ENCODE measurements at regions of chr1 and their contacts with region 1.

Region 1: GRCh38 chr1:204989266-204990058 is 53.5 kb upstream of the CNTN2 start:
- DNase-seq: peak; percentile 95
- H3K4me3 ChIP-seq: no peak overlapping the region; a peak in 1 of 4 replicates
- H3K27ac ChIP-seq: no peak overlapping the region
- H3K4me1 ChIP-seq: peaks cover 0 to 2% of the 10 kb centered on the region in 2 experiments; a peak in 2 of 4 replicates
- H3K27me3 ChIP-seq: no peaks in the 10 kb centered on the region
- CTCF ChIP-seq: peak; percentile 98
- EP300 ChIP-seq: no peak
- RAD21 ChIP-seq: peak; percentile 99

Region 2: GRCh38 chr1:204975570-204976235 is 13.8 kb before region 1 on chr1:
- CTCF ChIA-PET with region 1: interaction called, 123 read pairs
- POLR2A ChIA-PET with region 1: no interaction called
- DNase-seq: peak; percentile 88
- H3K4me3 ChIP-seq: no peak overlapping the region; a peak in 1 of 4 replicates
- H3K27ac ChIP-seq: no peak overlapping the region
- H3K4me1 ChIP-seq: peaks cover 0 to 11% of the 10 kb centered on the region in 2 experiments; a peak in 2 of 4 replicates
- H3K27me3 ChIP-seq: no peaks in the 10 kb centered on the region
- CTCF ChIP-seq: peak; percentile 77
- EP300 ChIP-seq: no peak
- RAD21 ChIP-seq: peak; percentile 79

Region 3: GRCh38 chr1:205032508-205032907 is 43.0 kb after region 1 on chr1:
- CTCF ChIA-PET with region 1: interaction called, 14 read pairs
- POLR2A ChIA-PET with region 1: no interaction called
- DNase-seq: no peak
- H3K4me3 ChIP-seq: no peak overlapping the region
- H3K27ac ChIP-seq: no peak overlapping the region
- H3K4me1 ChIP-seq: peaks cover 0 to 8% of the 10 kb centered on the region in 2 experiments; a peak in 1 of 4 replicates
- H3K27me3 ChIP-seq: peaks cover 22% of the 10 kb centered on the region
- CTCF ChIP-seq: no peak
- EP300 ChIP-seq: no peak
- RAD21 ChIP-seq: no peak

Region 4: GRCh38 chr1:205077158-205077933 is 87.9 kb after region 1 on chr1:
- CTCF ChIA-PET with region 1: interaction called, 45 read pairs
- POLR2A ChIA-PET with region 1: no interaction called
- DNase-seq: no peak
- H3K4me3 ChIP-seq: no peak overlapping the region; a peak in 1 of 4 replicates
- H3K27ac ChIP-seq: no peak overlapping the region
- H3K4me1 ChIP-seq: no peaks in the 10 kb centered on the region; a peak in 1 of 4 replicates
- H3K27me3 ChIP-seq: no peaks in the 10 kb centered on the region
- CTCF ChIP-seq: no peak
- EP300 ChIP-seq: no peak
- RAD21 ChIP-seq: no peak

Region 5: DNA sequence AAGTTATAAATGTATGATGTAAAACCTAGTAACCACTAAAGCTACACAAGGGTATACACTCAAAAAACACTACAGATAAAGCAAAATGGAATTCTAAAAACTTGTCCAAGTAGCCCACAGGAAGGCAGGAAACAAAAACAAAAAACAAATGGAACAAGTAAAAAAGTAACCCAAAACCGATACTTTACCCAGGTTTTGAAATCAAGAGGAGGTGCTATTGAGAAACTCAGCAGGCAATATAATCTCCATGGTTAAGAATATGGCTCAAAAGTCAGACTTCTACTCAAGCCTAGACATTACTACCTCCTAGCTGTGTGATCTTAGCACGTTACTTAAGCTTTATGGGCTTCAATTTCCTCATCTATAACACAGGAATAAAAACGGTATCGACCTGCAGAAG is 119.0 kb after region 1 on chr1:
- CTCF ChIA-PET with region 1: interaction called, 10 read pairs
- POLR2A ChIA-PET with region 1: no interaction called
- DNase-seq: no peak
- H3K4me3 ChIP-seq: no peak overlapping the region
- H3K27ac ChIP-seq: no peak overlapping the region
- H3K4me1 ChIP-seq: no peaks in the 10 kb centered on the region
- H3K27me3 ChIP-seq: no peaks in the 10 kb centered on the region
- CTCF ChIP-seq: no peak
- EP300 ChIP-seq: no peak
- RAD21 ChIP-seq: no peak